ENCODE measurements at regions of chr16 and their contacts with region 1.

Region 1: DNA sequence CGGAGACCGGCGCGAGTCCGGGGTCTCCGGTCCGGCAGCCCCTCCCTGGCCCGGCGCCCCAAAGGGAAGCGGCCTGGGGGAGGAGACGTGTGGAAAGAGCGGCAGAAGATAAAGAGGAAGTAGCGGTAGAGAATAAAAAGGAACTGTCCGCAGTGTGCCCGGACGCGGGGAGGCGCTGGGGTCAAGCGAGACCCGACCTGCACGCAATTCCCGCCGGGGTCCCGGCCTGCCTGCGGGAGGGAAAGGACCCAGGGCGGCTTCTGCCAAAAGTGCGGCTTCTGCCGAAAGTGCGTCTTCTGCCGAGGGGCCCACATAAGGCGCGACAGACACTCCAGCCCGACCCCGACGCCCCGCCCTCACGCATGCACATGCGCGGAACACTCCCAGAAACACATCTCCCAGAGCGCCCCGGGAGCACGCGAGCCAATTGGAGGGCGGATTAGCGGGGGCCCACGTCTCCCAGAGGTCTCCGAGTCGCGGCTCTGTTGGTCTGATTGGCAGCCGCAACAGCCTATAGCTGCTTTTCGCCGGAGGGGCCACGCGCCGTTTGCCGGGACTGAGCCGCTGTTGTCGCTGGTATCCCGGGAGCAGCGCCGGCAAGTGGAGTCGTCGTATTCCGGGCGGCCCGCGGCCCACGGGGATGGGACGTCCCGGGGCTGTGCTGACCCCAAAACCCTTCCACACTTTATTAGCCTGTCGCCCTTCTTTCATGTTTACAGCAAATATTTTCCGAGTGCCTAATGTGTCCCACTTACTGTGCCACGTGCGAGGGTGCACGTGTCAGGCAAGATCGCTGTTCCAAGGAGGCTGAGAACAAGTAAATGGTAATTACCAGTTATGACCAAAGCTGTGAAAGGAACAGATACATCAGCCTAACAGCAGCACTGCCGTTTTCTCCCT is 8.0 kb upstream of the MEFV start:
- DNase-seq: peak; percentile 96
- H3K4me3 ChIP-seq: peak overlapping the region; percentile 61 to 63
- H3K27ac ChIP-seq: peak overlapping the region; percentile 95 to 96
- H3K4me1 ChIP-seq: no peaks in the 10 kb centered on the region
- H3K27me3 ChIP-seq: no peaks in the 10 kb centered on the region
- CTCF ChIP-seq: peak in 1 of 4 experiments; percentile 9
- POLR2A ChIP-seq: peak; percentile 81

Region 2: GRCh38 chr16:2296661-2297505 is 967.5 kb before region 1 on chr16:
- intact Hi-C with region 1: no loop called
- DNase-seq: no peak
- H3K4me3 ChIP-seq: no peak overlapping the region
- H3K27ac ChIP-seq: no peak overlapping the region
- H3K4me1 ChIP-seq: no peaks in the 10 kb centered on the region
- H3K27me3 ChIP-seq: no peaks in the 10 kb centered on the region
- CTCF ChIP-seq: peak in 3 of 4 experiments; percentile 34 to 52 (median 45)
- POLR2A ChIP-seq: no peak

Region 3: DNA sequence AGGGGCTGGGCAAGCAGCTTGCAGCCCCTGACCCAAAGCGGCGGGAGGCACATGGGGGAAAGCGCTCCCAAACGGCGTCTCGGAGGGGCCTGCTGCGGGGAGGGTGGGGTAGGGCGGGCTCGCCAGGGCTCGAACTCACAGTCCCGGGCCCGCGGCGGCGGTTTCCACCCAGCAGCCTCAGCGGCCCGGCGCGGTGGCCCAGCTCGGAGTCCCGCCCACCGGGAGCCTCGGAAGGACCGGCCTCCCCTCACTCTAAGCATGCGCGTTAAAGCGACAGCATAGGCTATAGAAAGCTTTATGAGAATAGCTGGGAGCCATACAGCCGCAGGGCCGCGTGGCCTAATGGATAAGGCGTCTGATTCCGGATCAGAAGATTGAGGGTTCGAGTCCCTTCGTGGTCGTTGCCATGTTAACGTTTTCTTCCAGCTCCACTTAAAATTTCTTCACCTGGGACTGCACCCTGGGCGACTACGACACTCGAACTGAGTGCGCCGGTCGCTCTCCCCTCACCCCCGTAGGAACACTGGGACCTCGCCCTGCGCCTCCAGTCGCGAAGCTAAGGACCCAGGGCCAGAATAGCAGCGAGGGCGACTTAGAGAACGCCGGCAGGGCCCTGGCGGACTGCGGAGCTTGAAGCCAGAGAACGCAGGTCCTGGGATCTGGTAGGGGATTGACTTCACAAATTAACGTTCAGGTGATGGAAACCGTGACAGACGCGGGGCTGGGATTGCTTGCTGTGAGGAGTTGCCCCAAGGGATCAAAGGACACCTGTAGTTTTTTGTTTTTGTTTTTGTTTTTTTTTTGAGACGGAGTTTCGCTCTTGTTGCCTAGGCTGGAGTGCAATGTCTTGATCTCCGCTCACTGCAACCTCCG is 113.8 kb before region 1 on chr16:
- intact Hi-C with region 1: loop called (anchors 10 kb)
- DNase-seq: peak; percentile 96
- H3K4me3 ChIP-seq: peak overlapping the region; percentile 58 to 65
- H3K27ac ChIP-seq: peak overlapping the region; percentile 84 to 89
- H3K4me1 ChIP-seq: peaks cover 6% of the 10 kb centered on the region
- H3K27me3 ChIP-seq: no peaks in the 10 kb centered on the region
- CTCF ChIP-seq: peak in 1 of 4 experiments; percentile 3
- POLR2A ChIP-seq: peak; percentile 38

Region 4: GRCh38 chr16:3389663-3390338 is 125.4 kb after region 1 on chr16:
- intact Hi-C with region 1: no loop called
- DNase-seq: no peak
- H3K4me3 ChIP-seq: no peak overlapping the region
- H3K27ac ChIP-seq: no peak overlapping the region
- H3K4me1 ChIP-seq: no peaks in the 10 kb centered on the region
- H3K27me3 ChIP-seq: no peaks in the 10 kb centered on the region
- CTCF ChIP-seq: no peak
- POLR2A ChIP-seq: no peak

Region 5: GRCh38 chr16:3596101-3596861 is 331.9 kb after region 1 on chr16:
- intact Hi-C with region 1: no loop called
- DNase-seq: no peak
- H3K4me3 ChIP-seq: no peak overlapping the region
- H3K27ac ChIP-seq: no peak overlapping the region
- H3K4me1 ChIP-seq: no peaks in the 10 kb centered on the region
- H3K27me3 ChIP-seq: no peaks in the 10 kb centered on the region
- CTCF ChIP-seq: no peak
- POLR2A ChIP-seq: no peak